ENCODE measurements at regions of chr2 and their contacts with region 1.

Region 1: DNA sequence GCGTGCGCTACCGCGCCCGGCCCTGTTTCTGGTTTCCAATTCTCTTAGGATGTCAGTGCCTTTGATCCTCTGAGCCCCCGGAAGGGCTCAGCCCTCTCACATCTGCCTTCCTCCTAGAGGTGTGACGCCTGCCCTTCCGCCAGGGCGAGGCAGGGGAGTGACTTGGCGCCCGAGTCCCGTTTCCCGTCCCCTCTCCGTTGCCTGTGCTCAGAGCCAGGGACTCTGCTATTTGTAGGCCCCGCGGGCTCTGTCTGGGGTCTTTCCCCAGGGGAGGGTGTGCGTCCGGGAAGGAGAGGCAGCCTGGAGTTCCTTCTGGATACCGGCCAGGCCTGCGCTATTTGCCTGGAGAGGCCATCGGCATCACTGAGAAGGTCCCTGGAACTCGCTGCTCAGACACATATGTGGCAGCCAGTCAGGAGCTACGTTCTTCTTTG is 103.7 kb upstream of the TAF1B start:
- DNase-seq: peak; percentile 89

Region 2: GRCh38 chr2:9630749-9631483 is 108.6 kb before region 1 on chr2 and contains the start of gene YWHAQ:
- intact Hi-C with region 1: no loop called
- DNase-seq: peak; percentile 98
- total RNA-seq, gene YWHAQ: 299 TPM

Region 3: DNA sequence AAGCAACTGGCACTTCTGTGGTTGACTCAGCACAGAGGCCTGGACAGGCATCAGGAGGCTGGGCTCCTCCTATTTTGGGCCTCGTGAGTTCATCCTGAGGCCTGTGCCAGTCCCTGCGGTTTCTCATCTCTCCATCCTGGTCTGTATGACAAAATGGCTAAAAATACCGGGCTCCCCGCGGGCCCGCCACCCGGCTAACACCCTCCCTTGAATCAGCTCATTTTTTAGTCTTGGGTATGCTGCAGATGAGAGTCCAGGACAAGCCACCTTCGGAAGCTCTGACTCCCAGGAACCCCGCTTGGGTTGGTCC is 46.4 kb before region 1 on chr2:
- intact Hi-C with region 1: loop called (anchors 2 kb)
- DNase-seq: peak; percentile 85

Region 4: DNA sequence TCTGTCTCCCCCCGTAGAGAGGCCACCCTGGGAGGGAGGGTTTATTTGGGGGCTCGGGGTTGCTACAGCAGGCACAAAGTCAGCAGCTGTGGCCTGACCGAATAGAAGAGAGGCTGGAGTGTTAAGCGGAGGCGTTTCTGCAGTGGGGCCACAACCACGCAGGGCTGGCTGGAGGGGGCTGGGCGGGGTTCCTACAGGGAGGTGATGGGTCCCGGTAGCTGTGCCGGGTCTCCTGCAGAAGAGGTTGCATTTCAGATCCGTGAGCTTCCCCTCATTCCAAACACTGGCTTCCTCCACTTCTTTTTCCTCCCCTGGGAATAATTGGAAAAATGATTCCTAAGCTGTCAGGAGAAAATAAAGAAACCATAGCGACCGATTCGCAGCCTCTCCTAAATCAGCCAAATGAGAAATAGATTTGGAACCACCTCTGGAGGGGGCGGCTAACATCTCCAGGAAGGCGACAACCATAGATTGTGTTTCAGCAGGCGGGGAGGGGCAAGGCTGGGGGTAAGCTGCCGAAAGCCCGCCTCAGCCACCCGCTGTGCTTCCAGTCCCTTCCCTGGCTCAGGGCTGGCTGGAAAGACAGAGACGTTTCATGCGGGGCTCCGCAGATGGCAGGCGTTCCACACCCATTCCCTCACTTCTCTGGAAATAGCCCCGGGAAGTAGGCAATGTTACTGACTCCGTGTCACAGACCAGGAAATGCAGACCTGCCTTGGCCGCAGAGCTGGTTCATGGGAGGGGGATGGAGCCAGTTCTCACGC is 18.1 kb after region 1 on chr2:
- intact Hi-C with region 1: loop called (anchors 2 kb)
- DNase-seq: peak; percentile 87